ENCODE measurements at regions of chr5 and their contacts with region 1.

Region 1: GRCh38 chr5:14581333-14581890 is at the start of gene OTULINL:
- DNase-seq: peak; percentile 80 to 87 (median 83)
- H3K4me3 ChIP-seq: peak within 1 kb of the TSS; percentile 34 to 67
- H3K4me3 Mint-ChIP-seq: peak within 1 kb of the TSS; percentile 83 to 91 (median 90)
- H3K27ac ChIP-seq: peak within 1 kb of the TSS; percentile 67
- H3K27ac Mint-ChIP-seq: peak within 1 kb of the TSS; percentile 84 to 96 (median 91)
- H3K4me1 ChIP-seq: peaks cover 29% of the 10 kb centered on the region
- H3K4me1 Mint-ChIP-seq: peaks cover 15 to 44% (median 30%) of the 10 kb centered on the region in 4 donors
- H3K27me3 ChIP-seq: no peaks in the 10 kb centered on the region
- H3K27me3 Mint-ChIP-seq: no peaks in the 10 kb centered on the region
- total RNA-seq, gene OTULINL: 24.7 to 26.3 TPM

Region 2: GRCh38 chr5:14399054-14399692 is 182.2 kb before region 1 on chr5:
- CTCF ChIA-PET with region 1: interaction called, 26 read pairs
- POLR2A ChIA-PET with region 1: interaction called, 14 read pairs
- intact Hi-C with region 1: loop called (anchors 1 kb)
- DNase-seq: peak in 4 of 5 donors; percentile 27 to 51 (median 44)
- H3K4me3 ChIP-seq: no peak overlapping the region
- H3K4me3 Mint-ChIP-seq: no peak overlapping the region
- H3K27ac ChIP-seq: no peak overlapping the region
- H3K27ac Mint-ChIP-seq: no peak overlapping the region
- H3K4me1 ChIP-seq: no peaks in the 10 kb centered on the region
- H3K4me1 Mint-ChIP-seq: peaks cover 3 to 12% (median 7%) of the 10 kb centered on the region in 4 donors
- H3K27me3 ChIP-seq: no peaks in the 10 kb centered on the region
- H3K27me3 Mint-ChIP-seq: peaks cover 1 to 4% of the 10 kb centered on the region in 2 donors

Region 3: DNA sequence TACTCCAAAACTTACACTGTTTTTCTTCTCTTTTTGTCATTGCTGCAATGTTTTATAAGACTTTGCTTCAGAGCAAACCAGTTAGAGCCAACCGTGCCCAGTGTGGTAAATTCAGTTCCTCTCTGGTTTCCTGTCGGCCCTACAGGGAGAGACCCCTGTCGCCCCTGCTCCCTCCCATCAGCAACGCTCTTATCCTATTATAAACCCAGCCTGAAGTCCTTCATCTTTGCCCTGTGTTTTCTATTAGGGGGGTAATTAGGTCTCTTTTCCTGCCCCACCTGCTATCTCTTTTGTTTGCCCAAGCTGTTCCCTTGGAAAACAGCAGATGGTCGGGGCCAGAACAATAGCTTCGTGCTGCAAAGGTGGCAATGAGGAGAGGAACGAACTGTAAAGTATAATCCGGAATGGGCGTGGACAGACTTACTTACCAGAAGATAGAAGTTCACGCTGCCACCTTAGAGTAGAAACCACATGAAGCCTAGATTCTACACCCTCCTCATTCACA is 21.3 kb before region 1 on chr5:
- CTCF ChIA-PET with region 1: no interaction called
- POLR2A ChIA-PET with region 1: no interaction called
- intact Hi-C with region 1: loop called (anchors 2 kb)
- DNase-seq: peak in 3 of 5 donors; percentile 9 to 24 (median 12)
- H3K4me3 ChIP-seq: no peak overlapping the region
- H3K4me3 Mint-ChIP-seq: peak overlapping the region in 7 of 8 donors; percentile 46 to 84 (median 78)
- H3K27ac ChIP-seq: no peak overlapping the region
- H3K27ac Mint-ChIP-seq: peak overlapping the region in 6 of 7 donors; percentile 33 to 86 (median 56)
- H3K4me1 ChIP-seq: peaks cover 10% of the 10 kb centered on the region
- H3K4me1 Mint-ChIP-seq: peaks cover 10 to 18% (median 11%) of the 10 kb centered on the region in 4 donors
- H3K27me3 ChIP-seq: no peaks in the 10 kb centered on the region
- H3K27me3 Mint-ChIP-seq: peaks cover 0 to 1% of the 10 kb centered on the region in 2 donors

Region 4: GRCh38 chr5:14664302-14665100 is 83.1 kb after region 1 on chr5 and contains the start of gene OTULIN:
- CTCF ChIA-PET with region 1: interaction called, 3 read pairs
- POLR2A ChIA-PET with region 1: interaction called, 13 read pairs
- intact Hi-C with region 1: loop called (anchors 2 kb)
- DNase-seq: peak; percentile 82 to 92 (median 84)
- H3K4me3 ChIP-seq: peak within 1 kb of the TSS; percentile 54 to 80
- H3K4me3 Mint-ChIP-seq: peak within 1 kb of the TSS; percentile 94 to 98 (median 96)
- H3K27ac ChIP-seq: peak within 1 kb of the TSS; percentile 81
- H3K27ac Mint-ChIP-seq: peak within 1 kb of the TSS; percentile 89 to 99 (median 96)
- H3K4me1 ChIP-seq: peaks cover 61% of the 10 kb centered on the region
- H3K4me1 Mint-ChIP-seq: peaks cover 44 to 76% (median 56%) of the 10 kb centered on the region in 4 donors
- H3K27me3 ChIP-seq: no peaks in the 10 kb centered on the region
- H3K27me3 Mint-ChIP-seq: no peaks in the 10 kb centered on the region
- total RNA-seq, gene OTULIN: 59.4 to 69.0 TPM